ENCODE measurements at regions of chr5 and their contacts with region 1.

Region 1: GRCh38 chr5:135565725-135566421 is 12.9 kb downstream of the CXCL14 start:
- DNase-seq: peak; percentile 92
- H3K4me3 Mint-ChIP-seq: no peak overlapping the region
- H3K27ac Mint-ChIP-seq: no peak overlapping the region
- H3K4me1 Mint-ChIP-seq: peaks cover 2% of the 10 kb centered on the region
- H3K27me3 Mint-ChIP-seq: peaks cover 14% of the 10 kb centered on the region
- CTCF ChIP-seq: peak; percentile 93

Region 2: DNA sequence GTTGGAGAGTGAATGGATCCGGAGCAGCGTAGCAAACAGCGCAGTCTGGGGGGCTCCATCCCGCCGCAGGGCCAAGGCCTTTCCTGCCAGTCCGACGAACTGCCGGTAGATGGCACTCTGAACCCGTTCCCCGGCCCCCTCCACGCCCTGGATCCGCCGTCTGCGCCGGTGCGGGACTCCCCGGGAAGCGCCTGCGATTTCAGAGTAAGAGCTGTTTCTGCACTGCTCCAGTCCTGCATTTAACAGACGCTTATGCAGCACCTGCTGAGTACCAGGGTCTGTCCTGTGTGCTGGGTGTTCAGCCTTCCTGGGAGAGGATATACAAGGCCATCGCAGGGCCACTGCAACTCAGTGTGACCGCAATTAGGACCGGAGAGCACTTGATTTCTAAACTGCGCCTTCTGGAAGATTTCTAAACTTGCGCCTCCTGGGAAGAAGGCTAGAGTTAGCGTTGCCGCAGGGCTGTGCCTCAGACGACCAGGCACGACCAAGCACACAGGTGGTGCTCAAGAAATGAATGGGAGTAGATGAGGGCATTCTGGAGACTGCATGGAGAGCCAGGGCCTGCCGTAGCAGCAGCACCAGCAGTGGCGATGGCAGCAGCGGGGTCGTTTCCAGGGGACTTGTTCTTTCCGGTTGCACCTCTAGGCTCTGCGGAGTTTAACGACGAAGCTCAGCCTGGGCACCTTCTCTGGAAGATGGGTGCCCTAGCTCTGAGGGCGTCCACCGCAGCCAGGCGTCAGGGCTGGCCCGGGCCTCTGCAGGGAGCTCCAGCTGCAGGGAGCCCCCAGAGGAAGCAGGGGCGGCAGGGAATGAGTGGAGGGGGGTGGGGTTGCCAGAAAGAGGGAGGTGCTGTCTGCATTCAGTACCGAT is 99.5 kb before region 1 on chr5:
- CTCF ChIA-PET with region 1: interaction called, 43 read pairs
- intact Hi-C with region 1: no loop called
- DNase-seq: peak; percentile 87
- H3K4me3 Mint-ChIP-seq: peak overlapping the region; percentile 51
- H3K27ac Mint-ChIP-seq: no peak overlapping the region
- H3K4me1 Mint-ChIP-seq: peaks cover 8% of the 10 kb centered on the region
- H3K27me3 Mint-ChIP-seq: peaks cover 14% of the 10 kb centered on the region
- CTCF ChIP-seq: peak; percentile 88

Region 3: GRCh38 chr5:135578685-135579341 is 12.9 kb after region 1 on chr5 and contains the start of gene CXCL14:
- CTCF ChIA-PET with region 1: interaction called, 19 read pairs
- intact Hi-C with region 1: no loop called
- DNase-seq: peak; percentile 47
- H3K4me3 Mint-ChIP-seq: peak within 1 kb of the TSS; percentile 72
- H3K27ac Mint-ChIP-seq: no peak within 1 kb of the TSS
- H3K4me1 Mint-ChIP-seq: no peaks in the 10 kb centered on the region
- H3K27me3 Mint-ChIP-seq: no peaks in the 10 kb centered on the region
- CTCF ChIP-seq: no peak
- total RNA-seq, gene CXCL14: 0.27 TPM in 1 of 2 replicates, not detected in the other

Region 4: DNA sequence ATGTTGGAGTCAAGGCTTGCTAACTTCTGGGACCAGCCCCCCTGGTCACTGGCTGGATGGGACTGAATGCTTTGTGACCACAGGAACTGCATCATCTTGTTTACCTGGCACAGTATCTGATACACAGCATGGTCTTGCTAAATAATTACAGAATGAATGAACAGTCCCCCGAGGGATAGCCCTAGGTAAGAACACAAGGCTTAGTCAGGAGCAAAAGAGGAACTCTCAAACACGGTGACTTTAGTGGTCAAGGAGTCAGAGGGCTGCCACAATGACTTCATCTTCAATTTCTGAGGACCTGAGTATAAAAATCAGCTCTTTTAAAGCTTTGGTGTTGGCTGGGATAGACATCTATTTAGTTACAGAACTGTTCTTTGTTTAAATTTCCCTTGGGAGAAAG is 28.0 kb after region 1 on chr5:
- CTCF ChIA-PET with region 1: no interaction called
- intact Hi-C with region 1: no loop called
- DNase-seq: no peak
- H3K4me3 Mint-ChIP-seq: no peak overlapping the region
- H3K27ac Mint-ChIP-seq: no peak overlapping the region
- H3K4me1 Mint-ChIP-seq: no peaks in the 10 kb centered on the region
- H3K27me3 Mint-ChIP-seq: peaks cover 68% of the 10 kb centered on the region
- CTCF ChIP-seq: no peak

Region 5: GRCh38 chr5:135705141-135705631 is 139.3 kb after region 1 on chr5:
- CTCF ChIA-PET with region 1: interaction called, 10 read pairs
- intact Hi-C with region 1: no loop called
- DNase-seq: peak; percentile 43
- H3K4me3 Mint-ChIP-seq: no peak overlapping the region
- H3K27ac Mint-ChIP-seq: no peak overlapping the region
- H3K4me1 Mint-ChIP-seq: peaks cover 12% of the 10 kb centered on the region
- H3K27me3 Mint-ChIP-seq: peaks cover 4% of the 10 kb centered on the region
- CTCF ChIP-seq: no peak

Region 6: GRCh38 chr5:135829681-135830383 is 264.0 kb after region 1 on chr5:
- CTCF ChIA-PET with region 1: interaction called, 31 read pairs
- intact Hi-C with region 1: loop called (anchors 1 kb)
- DNase-seq: peak; percentile 75
- H3K4me3 Mint-ChIP-seq: no peak overlapping the region
- H3K27ac Mint-ChIP-seq: no peak overlapping the region
- H3K4me1 Mint-ChIP-seq: no peaks in the 10 kb centered on the region
- H3K27me3 Mint-ChIP-seq: peaks cover 92% of the 10 kb centered on the region
- CTCF ChIP-seq: peak; percentile 94